ENCODE measurements at regions of chr2 and their contacts with region 1.

Region 1: GRCh38 chr2:190343500-190344275 is at the start of gene INPP1:
- DNase-seq: peak; percentile 32 to 69
- ATAC-seq: peak; percentile 84
- H3K4me3 ChIP-seq: peak within 1 kb of the TSS; percentile 63
- H3K27ac ChIP-seq: peak within 1 kb of the TSS; percentile 67 to 95
- H3K4me1 ChIP-seq: peaks cover 30% of the 10 kb centered on the region
- CTCF ChIP-seq: no peak
- EP300 ChIP-seq: no peak
- POLR2A ChIP-seq: peak; percentile 24; the same call in 1 of the 2 replicates
- RAD21 ChIP-seq: no peak; a peak in 1 of 5 replicates
- polyA plus RNA-seq, gene INPP1: 12.8 and 14.6 TPM in 2 replicates

Region 2: GRCh38 chr2:190121971-190122370 is 221.7 kb before region 1 on chr2:
- CTCF ChIA-PET with region 1: no interaction called
- POLR2A ChIA-PET with region 1: no interaction called
- DNase-seq: peak; percentile 22 to 32
- ATAC-seq: peak in 1 of 2 experiments; percentile 68; a peak in 2 of 6 replicates
- H3K4me3 ChIP-seq: no peak overlapping the region
- H3K27ac ChIP-seq: no peak overlapping the region
- H3K4me1 ChIP-seq: no peaks in the 10 kb centered on the region
- CTCF ChIP-seq: peak; percentile 47
- EP300 ChIP-seq: no peak
- POLR2A ChIP-seq: no peak
- RAD21 ChIP-seq: peak; percentile 39 to 55; a peak in 3 of 5 replicates

Region 3: GRCh38 chr2:190511104-190511503 is 167.4 kb after region 1 on chr2:
- CTCF ChIA-PET with region 1: interaction called, 11 read pairs
- POLR2A ChIA-PET with region 1: no interaction called
- DNase-seq: peak; percentile 32 to 56
- ATAC-seq: peak; percentile 56 to 82; a peak in 4 of 6 replicates
- H3K4me3 ChIP-seq: no peak overlapping the region
- H3K27ac ChIP-seq: peak overlapping the region in 1 of 2 experiments; percentile 24; a peak in 1 of 6 replicates
- H3K4me1 ChIP-seq: peaks cover 11% of the 10 kb centered on the region
- CTCF ChIP-seq: peak; percentile 75
- EP300 ChIP-seq: no peak
- POLR2A ChIP-seq: no peak
- RAD21 ChIP-seq: peak; percentile 86 to 87